ENCODE measurements at regions of chr17 and their contacts with region 1.

Region 1: GRCh38 chr17:41548844-41549595 is 20.9 kb upstream of the KRT19 start:
- DNase-seq: peak; percentile 91
- ATAC-seq: peak; percentile 89
- H3K4me3 Mint-ChIP-seq: peak overlapping the region; percentile 47; the same call in 1 of the 2 replicates
- H3K27ac Mint-ChIP-seq: 0 out of 2 replicates have a peak overlapping the region, but pooled peaks have one; percentile 65
- H3K4me1 Mint-ChIP-seq: peaks cover 26% of the 10 kb centered on the region
- H3K27me3 Mint-ChIP-seq: peaks cover 5% of the 10 kb centered on the region
- CTCF ChIP-seq: peak; percentile 80

Region 2: GRCh38 chr17:41392278-41392677 is 156.7 kb before region 1 on chr17:
- CTCF ChIA-PET with region 1: interaction called, 11 read pairs
- POLR2A ChIA-PET with region 1: no interaction called
- DNase-seq: no peak
- ATAC-seq: no peak
- H3K4me3 Mint-ChIP-seq: no peak overlapping the region
- H3K27ac Mint-ChIP-seq: no peak overlapping the region
- H3K4me1 Mint-ChIP-seq: no peaks in the 10 kb centered on the region
- H3K27me3 Mint-ChIP-seq: no peaks in the 10 kb centered on the region
- CTCF ChIP-seq: no peak

Region 3: DNA sequence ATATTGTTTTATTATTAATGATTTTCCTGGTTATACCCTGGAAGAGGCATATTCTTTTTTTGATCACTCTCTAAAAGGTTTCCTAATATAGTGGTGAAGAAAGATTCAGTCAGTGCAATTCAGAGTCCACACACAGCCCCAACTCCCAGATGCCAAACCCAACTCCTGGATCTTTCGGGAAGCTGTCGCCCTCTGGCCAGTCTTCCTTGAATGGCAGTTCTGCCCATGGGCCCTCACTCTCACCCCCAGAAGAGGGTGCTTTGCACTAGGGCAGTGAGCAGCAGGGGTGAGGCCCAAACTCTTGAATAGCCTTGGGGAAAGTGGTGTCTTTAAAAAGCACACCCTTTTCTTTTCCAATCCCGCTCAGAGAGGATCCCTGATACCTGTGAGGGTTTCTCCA is 92.8 kb before region 1 on chr17:
- CTCF ChIA-PET with region 1: interaction called, 17 read pairs
- POLR2A ChIA-PET with region 1: no interaction called
- DNase-seq: peak; percentile 35
- ATAC-seq: peak; percentile 73
- H3K4me3 Mint-ChIP-seq: no peak overlapping the region
- H3K27ac Mint-ChIP-seq: no peak overlapping the region
- H3K4me1 Mint-ChIP-seq: no peaks in the 10 kb centered on the region
- H3K27me3 Mint-ChIP-seq: peaks cover 7% of the 10 kb centered on the region
- CTCF ChIP-seq: no peak

Region 4: DNA sequence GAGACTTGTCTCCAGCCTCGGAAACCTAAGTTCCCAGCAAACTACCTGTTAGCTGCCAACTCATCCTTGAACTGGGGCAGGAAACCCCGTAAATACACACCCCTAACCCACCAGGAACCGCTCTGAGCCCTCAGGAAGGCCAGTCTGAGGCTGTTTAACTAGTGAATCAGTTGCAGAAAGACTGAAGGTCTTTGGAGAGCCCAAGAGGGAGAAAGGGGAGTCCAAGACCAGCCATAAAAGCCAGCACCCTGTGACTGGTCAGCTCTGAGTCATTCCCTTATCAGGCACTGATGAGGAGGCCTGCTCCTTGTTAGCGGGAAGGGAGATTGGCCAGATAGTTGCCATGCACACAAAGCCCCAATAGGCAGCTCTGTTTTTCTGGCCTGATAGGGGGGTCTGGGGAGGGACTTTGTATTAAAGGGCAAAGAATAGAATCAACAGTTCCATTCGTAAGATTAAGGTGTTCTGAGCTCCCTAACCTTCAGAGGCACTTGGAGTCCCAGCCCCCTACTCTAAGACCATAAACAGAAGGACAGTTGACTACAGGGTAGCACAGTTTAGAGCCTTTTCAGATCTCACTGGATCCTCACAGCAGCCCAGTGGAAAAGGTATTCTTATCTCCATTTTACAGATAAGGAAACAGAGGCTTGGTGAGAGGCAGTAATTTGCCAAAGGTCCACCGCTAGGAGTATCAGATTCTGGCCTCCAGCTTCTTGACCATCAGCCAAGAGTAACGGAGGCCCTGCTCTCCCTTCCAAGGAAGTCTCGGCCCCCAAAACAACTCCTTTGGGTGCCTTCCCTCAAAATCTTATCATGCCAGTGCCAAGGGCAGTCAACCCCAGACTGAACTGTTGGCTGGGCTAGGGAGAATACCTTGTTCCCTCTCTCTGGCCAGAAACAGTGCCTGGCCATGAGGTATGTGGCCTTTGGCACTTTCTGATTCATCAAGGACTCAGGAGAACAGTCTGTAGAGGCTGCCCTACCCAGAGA is 18.7 kb before region 1 on chr17:
- CTCF ChIA-PET with region 1: interaction called, 125 read pairs
- POLR2A ChIA-PET with region 1: interaction called, 22 read pairs
- DNase-seq: no peak
- ATAC-seq: no peak
- H3K4me3 Mint-ChIP-seq: no peak overlapping the region
- H3K27ac Mint-ChIP-seq: no peak overlapping the region
- H3K4me1 Mint-ChIP-seq: peaks cover 41% of the 10 kb centered on the region
- H3K27me3 Mint-ChIP-seq: peaks cover 6% of the 10 kb centered on the region
- CTCF ChIP-seq: no peak

Region 5: GRCh38 chr17:41593311-41593981 is 44.4 kb after region 1 on chr17:
- CTCF ChIA-PET with region 1: interaction called, 15 read pairs
- POLR2A ChIA-PET with region 1: no interaction called
- DNase-seq: no peak
- ATAC-seq: no peak
- H3K4me3 Mint-ChIP-seq: no peak overlapping the region
- H3K27ac Mint-ChIP-seq: no peak overlapping the region
- H3K4me1 Mint-ChIP-seq: peaks cover 3% of the 10 kb centered on the region
- H3K27me3 Mint-ChIP-seq: no peaks in the 10 kb centered on the region; the same call in 1 of the 2 replicates
- CTCF ChIP-seq: no peak

Region 6: DNA sequence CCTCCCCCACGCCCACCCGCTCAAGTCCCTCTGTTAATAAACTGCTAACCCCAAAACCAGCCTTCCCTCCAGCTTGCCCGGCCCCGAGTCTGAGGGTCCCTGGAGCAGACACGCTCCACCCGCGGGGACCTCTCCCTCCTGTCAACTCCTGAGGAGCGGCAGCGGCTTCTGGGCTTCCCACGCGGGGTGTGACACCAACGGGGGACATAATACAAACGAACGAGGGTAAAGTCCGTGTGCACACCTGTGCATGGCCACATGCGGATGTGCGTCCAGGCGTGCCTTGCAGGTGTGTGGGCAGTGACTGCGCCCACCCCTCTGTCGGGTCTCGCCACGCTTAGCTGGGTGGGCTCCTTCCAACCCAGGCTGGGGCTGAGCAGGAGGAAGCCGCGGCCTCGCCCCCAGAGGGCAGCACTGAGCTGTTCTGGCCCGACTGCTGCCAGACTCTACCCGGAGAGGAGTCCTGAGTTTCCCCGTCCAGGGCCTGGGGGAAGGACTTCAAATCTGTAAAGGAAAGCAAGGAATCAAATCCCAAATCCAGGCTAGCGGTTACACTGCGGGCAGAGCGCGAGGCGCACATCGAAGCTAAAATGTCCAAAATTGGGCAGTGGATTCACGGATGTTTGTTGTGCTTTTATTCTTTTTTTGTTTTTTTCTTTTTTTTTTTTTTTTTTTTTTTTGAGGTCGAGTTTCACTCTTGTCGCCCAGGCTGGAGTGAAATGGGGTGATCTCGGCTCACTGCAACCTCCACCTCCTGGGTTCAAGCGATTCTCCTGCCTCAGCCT is 99.6 kb after region 1 on chr17:
- CTCF ChIA-PET with region 1: interaction called, 319 read pairs
- POLR2A ChIA-PET with region 1: interaction called, 4 read pairs
- DNase-seq: peak; percentile 94
- ATAC-seq: peak; percentile 81
- H3K4me3 Mint-ChIP-seq: peak overlapping the region; percentile 71
- H3K27ac Mint-ChIP-seq: no peak overlapping the region
- H3K4me1 Mint-ChIP-seq: peaks cover 2% of the 10 kb centered on the region
- H3K27me3 Mint-ChIP-seq: no peaks in the 10 kb centered on the region
- CTCF ChIP-seq: peak; percentile 90